ENCODE measurements at regions of chr3 and their contacts with region 1.

Region 1: DNA sequence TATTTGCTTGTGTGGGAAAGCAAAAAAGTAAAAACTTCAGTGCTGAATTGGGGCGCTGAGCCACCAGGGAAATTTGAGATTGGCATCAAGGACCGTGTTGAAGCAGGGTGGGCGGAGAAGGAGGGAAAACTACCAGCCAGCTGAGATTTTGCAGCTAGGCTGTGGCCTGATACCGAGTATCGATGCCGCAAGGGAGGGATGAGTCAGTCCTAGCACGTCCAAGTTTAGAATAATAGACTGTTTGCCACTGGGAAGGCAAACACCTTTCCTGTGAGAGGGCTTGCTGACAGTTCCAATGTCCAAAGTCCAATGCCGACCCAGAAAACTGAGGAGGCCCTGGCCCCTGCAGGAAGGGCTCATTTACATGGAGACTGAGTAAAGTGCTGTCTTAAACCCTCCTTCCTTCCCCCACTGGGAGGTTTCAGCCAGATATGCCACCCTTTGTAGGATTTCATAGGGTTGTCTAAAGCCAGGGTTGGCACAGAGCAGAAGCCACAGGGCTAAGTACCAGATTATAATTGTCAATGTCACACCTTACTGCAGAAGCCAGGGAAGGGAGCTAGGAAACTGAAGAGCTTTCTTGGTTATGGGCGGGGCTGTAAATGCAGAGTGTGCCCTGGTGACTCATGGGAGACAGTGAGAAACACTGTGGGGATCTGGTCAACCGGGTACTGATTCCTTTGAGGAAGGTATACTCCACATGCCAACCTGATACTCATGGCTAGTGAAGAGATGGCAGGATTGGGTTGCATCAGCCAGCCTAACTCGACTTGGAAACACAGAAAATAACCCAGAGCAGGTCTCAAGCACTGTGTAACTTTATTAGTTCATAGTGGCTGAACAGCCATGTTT is 28.4 kb upstream of the PIK3CB start:
- DNase-seq: peak in 1 of 2 experiments; percentile 53
- H3K4me3 ChIP-seq: peak overlapping the region in 2 of 4 experiments; percentile 33 to 47; a peak in 4 of 8 replicates
- H3K27ac ChIP-seq: peak overlapping the region; percentile 66
- H3K4me1 ChIP-seq: peaks cover 14 to 28% (median 22%) of the 10 kb centered on the region in 4 experiments
- H3K27me3 ChIP-seq: no peaks in the 10 kb centered on the region
- CTCF ChIP-seq: peak in 1 of 3 experiments; percentile 1; a peak in 1 of 4 replicates
- EP300 ChIP-seq: no peak
- POLR2A ChIP-seq: peak in 1 of 2 experiments; percentile 66; a peak in 2 of 3 replicates
- RAD21 ChIP-seq: no peak

Region 2: GRCh38 chr3:138824114-138824506 is 39.0 kb before region 1 on chr3:
- CTCF ChIA-PET with region 1: interaction called, 3 read pairs
- POLR2A ChIA-PET with region 1: interaction called, 11 read pairs
- DNase-seq: no peak
- H3K4me3 ChIP-seq: no peak overlapping the region
- H3K27ac ChIP-seq: peak overlapping the region; percentile 67; the same call in 1 of the 2 replicates
- H3K4me1 ChIP-seq: peaks cover 3 to 11% (median 6%) of the 10 kb centered on the region in 4 experiments; a peak in 5 of 7 replicates
- H3K27me3 ChIP-seq: no peaks in the 10 kb centered on the region
- CTCF ChIP-seq: no peak
- EP300 ChIP-seq: no peak
- POLR2A ChIP-seq: no peak
- RAD21 ChIP-seq: no peak

Region 3: DNA sequence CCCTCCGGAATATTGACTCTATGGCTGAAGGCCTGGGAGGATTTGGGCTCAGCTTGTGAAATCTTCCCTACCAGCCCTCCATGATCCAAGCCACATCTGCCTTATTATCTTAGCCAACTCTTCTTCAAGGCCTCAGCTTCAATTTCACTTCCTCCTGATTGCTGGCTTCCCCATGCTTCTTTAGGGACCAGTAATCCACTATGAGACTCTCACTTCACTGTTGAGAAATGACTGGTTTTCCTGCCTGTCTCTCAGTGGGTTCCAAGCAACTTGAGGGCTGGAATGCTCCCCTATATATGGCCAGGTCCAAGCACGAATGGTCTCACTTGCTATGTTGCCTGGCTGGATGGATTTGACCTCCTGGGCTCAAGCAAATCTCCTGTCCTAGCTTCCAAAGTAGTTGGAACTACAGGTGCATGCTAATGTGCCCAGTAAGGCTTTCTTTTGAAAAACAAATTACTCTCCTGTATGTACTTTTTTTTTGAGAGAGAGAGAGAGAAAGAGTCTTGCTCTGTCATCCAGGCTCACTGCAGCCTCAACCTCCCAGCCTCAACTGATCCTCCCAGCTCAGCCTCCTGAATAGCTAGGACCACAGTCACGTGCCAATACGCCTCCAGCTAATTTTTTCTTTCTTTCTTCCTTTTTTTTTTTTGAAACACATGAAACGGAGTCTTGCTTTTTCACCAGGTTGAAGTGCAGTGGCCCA is 20.5 kb before region 1 on chr3:
- CTCF ChIA-PET with region 1: interaction called, 8 read pairs
- POLR2A ChIA-PET with region 1: interaction called, 34 read pairs
- DNase-seq: no peak
- H3K4me3 ChIP-seq: no peak overlapping the region
- H3K27ac ChIP-seq: no peak overlapping the region
- H3K4me1 ChIP-seq: peaks cover 7 to 21% (median 12%) of the 10 kb centered on the region in 4 experiments; a peak in 6 of 7 replicates
- H3K27me3 ChIP-seq: no peaks in the 10 kb centered on the region
- CTCF ChIP-seq: no peak
- EP300 ChIP-seq: no peak
- POLR2A ChIP-seq: no peak
- RAD21 ChIP-seq: no peak

Region 4: DNA sequence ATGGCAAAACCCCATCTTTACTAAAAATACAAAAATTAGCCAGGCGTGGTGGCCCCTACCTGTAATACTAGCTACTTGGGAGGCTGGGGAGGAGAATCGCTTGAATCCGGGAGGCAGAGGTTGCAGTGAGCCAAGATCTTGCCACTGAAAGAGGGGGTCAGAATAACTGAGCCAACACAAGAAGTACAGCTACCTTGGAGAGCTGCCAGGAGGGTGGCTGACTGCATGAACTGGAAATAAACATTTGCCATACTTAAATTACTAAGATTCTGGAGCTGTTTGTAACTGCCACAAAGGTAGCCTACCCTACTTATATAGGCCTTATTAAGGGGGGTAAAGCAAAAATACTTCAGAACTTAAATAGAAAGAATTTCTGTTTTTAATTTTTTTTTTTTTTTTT is 13.0 kb before region 1 on chr3:
- CTCF ChIA-PET with region 1: interaction called, 8 read pairs
- POLR2A ChIA-PET with region 1: interaction called, 34 read pairs
- DNase-seq: no peak
- H3K4me3 ChIP-seq: no peak overlapping the region
- H3K27ac ChIP-seq: no peak overlapping the region
- H3K4me1 ChIP-seq: peaks cover 7 to 15% (median 11%) of the 10 kb centered on the region in 4 experiments; a peak in 6 of 7 replicates
- H3K27me3 ChIP-seq: no peaks in the 10 kb centered on the region
- CTCF ChIP-seq: no peak
- EP300 ChIP-seq: no peak
- POLR2A ChIP-seq: no peak
- RAD21 ChIP-seq: no peak

Region 5: DNA sequence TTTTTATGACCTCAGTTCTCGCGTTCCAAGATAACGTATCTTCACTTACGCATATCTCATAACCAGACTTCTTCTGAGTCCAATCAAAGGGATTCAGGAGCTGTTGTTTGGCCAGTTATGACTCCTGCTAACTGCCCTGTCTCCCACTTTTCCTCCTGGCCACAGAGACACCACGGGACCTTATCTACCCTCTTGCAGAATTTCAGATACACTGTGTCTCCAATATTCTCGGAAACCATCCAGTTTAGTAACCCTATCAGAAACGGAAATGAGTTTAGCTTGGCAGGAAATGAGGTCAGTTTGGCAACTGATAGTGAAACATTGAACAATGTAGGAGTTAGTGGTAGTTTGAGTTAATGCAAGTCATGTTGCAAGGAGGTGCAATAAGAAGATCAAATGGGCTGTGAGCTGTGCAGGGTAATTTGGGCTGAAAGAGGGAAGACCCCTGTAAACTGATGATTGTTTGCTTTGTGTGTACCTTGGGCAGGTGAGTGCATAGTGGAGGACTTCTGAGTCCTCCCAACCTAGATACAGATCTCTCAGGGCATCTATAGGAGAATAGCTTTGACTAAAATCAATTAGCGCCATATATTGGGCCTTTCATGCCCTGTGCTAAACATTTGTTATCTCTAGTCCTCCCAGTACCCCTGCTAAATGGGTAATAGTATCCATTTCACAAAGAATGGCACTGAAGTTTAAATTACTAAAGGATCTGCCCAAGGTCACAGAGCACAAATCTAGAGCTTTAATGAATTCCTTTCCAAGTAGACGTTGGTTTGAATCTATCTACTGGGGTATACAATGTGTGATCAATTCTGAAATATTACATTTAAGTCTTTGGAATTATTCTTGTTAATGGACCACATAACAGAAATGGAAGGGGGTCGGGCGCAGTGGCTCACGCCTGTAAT is 12.9 kb after region 1 on chr3:
- CTCF ChIA-PET with region 1: no interaction called
- POLR2A ChIA-PET with region 1: interaction called, 15 read pairs
- DNase-seq: no peak
- H3K4me3 ChIP-seq: no peak overlapping the region
- H3K27ac ChIP-seq: no peak overlapping the region
- H3K4me1 ChIP-seq: peaks cover 0 to 4% (median 0%) of the 10 kb centered on the region in 4 experiments; a peak in 1 of 7 replicates
- H3K27me3 ChIP-seq: no peaks in the 10 kb centered on the region
- CTCF ChIP-seq: no peak
- EP300 ChIP-seq: no peak
- POLR2A ChIP-seq: no peak
- RAD21 ChIP-seq: no peak